ENCODE measurements at regions of chr6 and their contacts with region 1.

Region 1: GRCh38 chr6:96836631-96837080 is 621 bp downstream of the GPR63 start:
- DNase-seq: no peak
- ATAC-seq: peak; percentile 35
- H3K4me3 ChIP-seq: peak overlapping the region; percentile 69 to 80
- H3K27ac ChIP-seq: peak overlapping the region; percentile 45; the same call in 1 of the 2 replicates
- H3K4me1 ChIP-seq: peaks cover 5% of the 10 kb centered on the region; the same call in 1 of the 2 replicates
- H3K27me3 ChIP-seq: peaks cover 15% of the 10 kb centered on the region; the same call in 1 of the 2 replicates
- CTCF ChIP-seq: no peak

Region 2: GRCh38 chr6:96563853-96564252 is 272.8 kb before region 1 on chr6:
- CTCF ChIA-PET with region 1: no interaction called
- POLR2A ChIA-PET with region 1: interaction called, 19 read pairs
- in situ Hi-C with region 1: no loop called
- intact Hi-C with region 1: no loop called
- DNase-seq: no peak
- ATAC-seq: no peak
- H3K4me3 ChIP-seq: no peak overlapping the region
- H3K27ac ChIP-seq: no peak overlapping the region
- H3K4me1 ChIP-seq: no peaks in the 10 kb centered on the region
- H3K27me3 ChIP-seq: no peaks in the 10 kb centered on the region; the same call in 1 of the 2 replicates
- CTCF ChIP-seq: no peak

Region 3: GRCh38 chr6:96725296-96725695 is 111.4 kb before region 1 on chr6:
- CTCF ChIA-PET with region 1: interaction called, 19 read pairs
- POLR2A ChIA-PET with region 1: no interaction called
- in situ Hi-C with region 1: no loop called
- intact Hi-C with region 1: no loop called
- DNase-seq: no peak
- ATAC-seq: no peak
- H3K4me3 ChIP-seq: no peak overlapping the region
- H3K27ac ChIP-seq: no peak overlapping the region
- H3K4me1 ChIP-seq: no peaks in the 10 kb centered on the region
- H3K27me3 ChIP-seq: no peaks in the 10 kb centered on the region; the same call in 1 of the 2 replicates
- CTCF ChIP-seq: no peak

Region 4: GRCh38 chr6:96853083-96853482 is 16.4 kb after region 1 on chr6:
- CTCF ChIA-PET with region 1: no interaction called
- POLR2A ChIA-PET with region 1: no interaction called
- in situ Hi-C with region 1: no loop called
- intact Hi-C with region 1: no loop called
- DNase-seq: no peak
- ATAC-seq: no peak
- H3K4me3 ChIP-seq: no peak overlapping the region
- H3K27ac ChIP-seq: no peak overlapping the region
- H3K4me1 ChIP-seq: no peaks in the 10 kb centered on the region
- H3K27me3 ChIP-seq: no peaks in the 10 kb centered on the region
- CTCF ChIP-seq: no peak

Measured in Panc1 (cell line).